IMR-90 (cell line): ENCODE measurements at regions of chr7 and their contacts with region 1.

Region 1: GRCh38 chr7:123635551-123636359 is 19.9 kb upstream of the LMOD2 start:
- DNase-seq: peak; percentile 61
- ATAC-seq: peak; percentile 89
- H3K4me3 ChIP-seq: no peak overlapping the region
- H3K27ac ChIP-seq: no peak overlapping the region
- H3K4me1 ChIP-seq: no peaks in the 10 kb centered on the region
- H3K27me3 ChIP-seq: no peaks in the 10 kb centered on the region
- CTCF ChIP-seq: peak; percentile 73
- POLR2A ChIP-seq: no peak
- RAD21 ChIP-seq: peak; percentile 85

Region 2: DNA sequence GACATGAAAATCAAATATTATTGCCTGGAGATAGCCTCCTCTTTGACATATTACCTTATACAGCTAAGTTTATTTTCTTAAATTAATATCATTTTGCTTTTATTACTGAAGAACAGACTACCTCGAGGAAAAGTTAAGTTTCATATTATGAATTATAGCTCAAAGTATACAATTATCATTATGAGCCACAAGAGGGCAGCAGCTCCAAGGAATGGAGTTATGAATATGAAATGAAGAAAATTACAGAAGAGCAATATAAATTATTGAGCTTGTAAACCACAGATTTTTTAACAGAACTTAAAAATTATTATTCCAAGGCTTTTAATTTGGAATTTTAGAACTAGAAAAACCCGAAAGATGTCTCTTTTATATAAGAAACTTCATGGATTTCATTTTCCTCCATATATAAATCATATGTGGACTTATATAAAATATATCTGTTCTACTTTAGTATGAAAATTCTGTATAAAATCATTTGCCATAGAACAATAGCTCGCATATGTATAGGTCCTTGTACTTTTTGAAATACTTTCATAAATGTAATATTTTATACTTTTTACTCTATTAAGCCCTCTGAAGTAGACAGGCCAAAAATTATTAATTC is 141.5 kb before region 1 on chr7:
- CTCF ChIA-PET with region 1: no interaction called
- POLR2A ChIA-PET with region 1: no interaction called
- dilution Hi-C with region 1: no loop called
- in situ Hi-C with region 1: no loop called
- intact Hi-C with region 1: loop called (anchors 10 kb)
- DNase-seq: peak; percentile 27
- ATAC-seq: no peak
- H3K4me3 ChIP-seq: no peak overlapping the region
- H3K27ac ChIP-seq: no peak overlapping the region
- H3K4me1 ChIP-seq: no peaks in the 10 kb centered on the region
- H3K27me3 ChIP-seq: no peaks in the 10 kb centered on the region
- CTCF ChIP-seq: peak; percentile 71
- POLR2A ChIP-seq: no peak
- RAD21 ChIP-seq: peak; percentile 66

Region 3: DNA sequence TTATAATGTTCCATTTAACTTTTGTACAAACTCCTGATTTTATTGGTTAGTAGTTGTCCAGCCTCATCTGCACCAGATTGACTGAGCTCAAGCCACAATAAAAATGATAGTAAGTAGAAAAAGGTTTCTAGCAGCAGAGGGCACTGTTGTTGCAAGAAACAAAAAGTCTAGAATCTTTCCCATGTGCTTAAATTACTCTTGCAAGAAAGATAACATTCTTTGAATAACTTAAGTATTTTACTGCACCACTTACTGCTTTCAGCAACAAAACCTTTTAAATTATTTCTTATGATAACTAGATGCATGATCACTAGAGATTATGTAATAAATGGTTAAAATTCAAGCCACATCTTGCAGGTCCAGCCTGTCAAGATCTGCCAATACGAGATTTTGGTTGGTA is 46.9 kb after region 1 on chr7:
- CTCF ChIA-PET with region 1: interaction called, 3 read pairs
- POLR2A ChIA-PET with region 1: no interaction called
- dilution Hi-C with region 1: no loop called
- in situ Hi-C with region 1: no loop called
- intact Hi-C with region 1: loop called (anchors 5 kb)
- DNase-seq: peak; percentile 77
- ATAC-seq: peak; percentile 74
- H3K4me3 ChIP-seq: no peak overlapping the region
- H3K27ac ChIP-seq: no peak overlapping the region
- H3K4me1 ChIP-seq: 0 out of 2 replicates have a peak, but pooled peaks cover 3% of the 10 kb centered on the region
- H3K27me3 ChIP-seq: no peaks in the 10 kb centered on the region
- CTCF ChIP-seq: peak; percentile 68
- POLR2A ChIP-seq: no peak
- RAD21 ChIP-seq: peak; percentile 68

Region 4: GRCh38 chr7:123712619-123713018 is 76.9 kb after region 1 on chr7:
- CTCF ChIA-PET with region 1: no interaction called
- POLR2A ChIA-PET with region 1: no interaction called
- dilution Hi-C with region 1: no loop called
- in situ Hi-C with region 1: no loop called
- intact Hi-C with region 1: no loop called
- DNase-seq: peak; percentile 69
- ATAC-seq: peak; percentile 65
- H3K4me3 ChIP-seq: no peak overlapping the region
- H3K27ac ChIP-seq: no peak overlapping the region
- H3K4me1 ChIP-seq: peaks cover 16% of the 10 kb centered on the region
- H3K27me3 ChIP-seq: no peaks in the 10 kb centered on the region
- CTCF ChIP-seq: no peak
- POLR2A ChIP-seq: no peak
- RAD21 ChIP-seq: no peak

Region 5: GRCh38 chr7:123865517-123866117 is 229.9 kb after region 1 on chr7:
- CTCF ChIA-PET with region 1: interaction called, 17 read pairs
- POLR2A ChIA-PET with region 1: no interaction called
- dilution Hi-C with region 1: no loop called
- in situ Hi-C with region 1: loop called (anchors 25 kb)
- intact Hi-C with region 1: loop called (anchors 1 kb)
- DNase-seq: peak; percentile 67
- ATAC-seq: peak; percentile 96
- H3K4me3 ChIP-seq: no peak overlapping the region
- H3K27ac ChIP-seq: no peak overlapping the region
- H3K4me1 ChIP-seq: no peaks in the 10 kb centered on the region
- H3K27me3 ChIP-seq: peaks cover 3% of the 10 kb centered on the region
- CTCF ChIP-seq: peak; percentile 74
- POLR2A ChIP-seq: no peak
- RAD21 ChIP-seq: peak; percentile 69

Region 6: GRCh38 chr7:123888192-123888591 is 252.4 kb after region 1 on chr7:
- CTCF ChIA-PET with region 1: no interaction called
- POLR2A ChIA-PET with region 1: no interaction called
- dilution Hi-C with region 1: no loop called
- in situ Hi-C with region 1: no loop called
- intact Hi-C with region 1: no loop called
- DNase-seq: no peak
- ATAC-seq: no peak
- H3K4me3 ChIP-seq: no peak overlapping the region
- H3K27ac ChIP-seq: no peak overlapping the region
- H3K4me1 ChIP-seq: no peaks in the 10 kb centered on the region
- H3K27me3 ChIP-seq: no peaks in the 10 kb centered on the region
- CTCF ChIP-seq: no peak
- POLR2A ChIP-seq: no peak
- RAD21 ChIP-seq: no peak

Region 7: DNA sequence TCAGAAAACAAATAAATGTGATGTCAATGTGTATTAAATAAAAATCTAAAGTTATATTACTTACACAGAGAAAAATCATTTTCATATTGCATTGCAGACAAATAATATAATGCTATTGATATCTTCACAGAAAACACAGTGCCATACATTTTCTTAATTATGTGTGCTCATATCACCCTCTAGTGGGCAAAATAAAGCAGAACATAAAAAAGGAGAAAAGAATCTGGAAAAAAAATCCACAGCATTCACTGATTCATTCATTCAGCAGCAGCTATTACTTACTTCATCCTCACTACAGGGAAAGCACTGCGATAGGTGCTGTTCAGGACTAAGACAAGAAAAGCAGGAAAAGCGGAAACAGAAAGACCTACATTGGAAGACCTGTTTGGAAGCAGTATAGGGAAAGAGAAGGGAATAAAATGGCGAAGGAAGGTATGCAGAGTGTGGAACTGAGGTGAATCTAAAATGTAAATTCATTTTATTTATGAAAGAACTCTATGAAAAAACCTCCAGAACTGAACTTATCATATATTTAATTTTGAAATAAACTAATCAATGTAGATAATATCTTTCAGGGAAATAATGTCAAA is 1220.6 kb after region 1 on chr7:
- CTCF ChIA-PET with region 1: no interaction called
- POLR2A ChIA-PET with region 1: no interaction called
- dilution Hi-C with region 1: no loop called
- in situ Hi-C with region 1: no loop called
- intact Hi-C with region 1: loop called (anchors 5 kb)
- DNase-seq: peak; percentile 61
- ATAC-seq: peak; percentile 79
- H3K4me3 ChIP-seq: no peak overlapping the region
- H3K27ac ChIP-seq: no peak overlapping the region
- H3K4me1 ChIP-seq: no peaks in the 10 kb centered on the region
- H3K27me3 ChIP-seq: no peaks in the 10 kb centered on the region
- CTCF ChIP-seq: peak; percentile 71
- POLR2A ChIP-seq: no peak
- RAD21 ChIP-seq: peak; percentile 69